Body of pancreas (tissue), 4 donors: ENCODE measurements at regions of chr18 and their contacts with region 1.

Region 1: GRCh38 chr18:13823707-13824395 is at the start of gene MC5R:
- DNase-seq: peak; percentile 46 to 70 (median 61)
- ATAC-seq: peak; percentile 91
- H3K4me3 ChIP-seq: no peak within 1 kb of the TSS
- H3K27ac ChIP-seq: no peak within 1 kb of the TSS
- H3K4me1 ChIP-seq: peaks cover 8% of the 10 kb centered on the region
- H3K27me3 ChIP-seq: no peaks in the 10 kb centered on the region
- CTCF ChIP-seq: peak; percentile 76 to 96 (median 89)
- POLR2A ChIP-seq: no peak
- total RNA-seq, gene MC5R: not detected

Region 2: GRCh38 chr18:13940326-13940725 is 116.5 kb after region 1 on chr18:
- intact Hi-C with region 1: no loop called
- DNase-seq: no peak
- ATAC-seq: no peak
- H3K4me3 ChIP-seq: no peak overlapping the region
- H3K27ac ChIP-seq: no peak overlapping the region
- H3K4me1 ChIP-seq: no peaks in the 10 kb centered on the region
- H3K27me3 ChIP-seq: no peaks in the 10 kb centered on the region
- CTCF ChIP-seq: no peak
- POLR2A ChIP-seq: no peak

Region 3: GRCh38 chr18:14089781-14090180 is 265.9 kb after region 1 on chr18:
- intact Hi-C with region 1: loop called (anchors 10 kb)
- DNase-seq: no peak
- ATAC-seq: no peak
- H3K4me3 ChIP-seq: no peak overlapping the region
- H3K27ac ChIP-seq: no peak overlapping the region
- H3K4me1 ChIP-seq: no peaks in the 10 kb centered on the region
- H3K27me3 ChIP-seq: no peaks in the 10 kb centered on the region
- CTCF ChIP-seq: no peak
- POLR2A ChIP-seq: no peak